ENCODE measurements at regions of chr20 and their contacts with region 1.

Region 1: DNA sequence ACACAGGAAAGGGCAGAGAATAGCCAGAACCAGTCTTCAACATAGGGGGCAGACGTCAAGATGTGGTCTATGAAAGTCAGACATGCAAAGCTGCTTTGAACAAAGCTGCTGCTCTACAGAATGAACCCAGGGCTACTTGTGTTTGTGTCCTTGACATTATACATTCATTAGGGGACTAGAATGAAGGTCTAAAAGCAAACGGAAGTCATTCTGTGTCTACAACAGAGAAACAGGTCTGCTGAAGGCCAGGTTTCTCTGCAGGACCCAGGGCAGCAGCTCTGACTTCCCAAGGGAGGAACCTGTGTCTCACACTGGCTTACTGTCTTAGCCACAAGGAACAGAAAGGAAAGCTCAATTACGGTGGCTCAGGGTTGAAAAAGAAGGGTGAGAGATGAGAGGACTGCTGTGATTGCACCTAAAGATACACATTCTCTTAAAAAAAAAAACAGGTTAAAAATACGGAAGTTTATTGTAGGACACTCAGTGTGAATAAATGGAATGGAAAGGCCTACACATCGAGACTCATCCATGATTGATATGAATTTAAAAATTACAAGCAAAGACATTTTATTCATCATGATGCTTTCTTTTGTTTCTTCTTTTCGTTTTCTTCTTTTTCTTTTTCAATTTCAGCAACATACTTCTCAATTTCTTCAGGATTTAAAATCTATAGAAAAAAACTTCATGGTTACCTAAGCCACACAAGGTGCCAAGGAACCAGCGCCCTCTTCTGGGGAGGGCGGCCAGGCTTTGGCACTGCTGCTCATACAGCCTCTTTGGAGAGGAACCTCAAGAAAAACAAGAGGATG is 6.7 kb downstream of the PSMA7 start:
- H3K4me3 Mint-ChIP-seq: no peak overlapping the region
- H3K27ac Mint-ChIP-seq: peak overlapping the region; percentile 8
- H3K4me1 Mint-ChIP-seq: peaks cover 83% of the 10 kb centered on the region
- H3K27me3 Mint-ChIP-seq: no peaks in the 10 kb centered on the region

Region 2: DNA sequence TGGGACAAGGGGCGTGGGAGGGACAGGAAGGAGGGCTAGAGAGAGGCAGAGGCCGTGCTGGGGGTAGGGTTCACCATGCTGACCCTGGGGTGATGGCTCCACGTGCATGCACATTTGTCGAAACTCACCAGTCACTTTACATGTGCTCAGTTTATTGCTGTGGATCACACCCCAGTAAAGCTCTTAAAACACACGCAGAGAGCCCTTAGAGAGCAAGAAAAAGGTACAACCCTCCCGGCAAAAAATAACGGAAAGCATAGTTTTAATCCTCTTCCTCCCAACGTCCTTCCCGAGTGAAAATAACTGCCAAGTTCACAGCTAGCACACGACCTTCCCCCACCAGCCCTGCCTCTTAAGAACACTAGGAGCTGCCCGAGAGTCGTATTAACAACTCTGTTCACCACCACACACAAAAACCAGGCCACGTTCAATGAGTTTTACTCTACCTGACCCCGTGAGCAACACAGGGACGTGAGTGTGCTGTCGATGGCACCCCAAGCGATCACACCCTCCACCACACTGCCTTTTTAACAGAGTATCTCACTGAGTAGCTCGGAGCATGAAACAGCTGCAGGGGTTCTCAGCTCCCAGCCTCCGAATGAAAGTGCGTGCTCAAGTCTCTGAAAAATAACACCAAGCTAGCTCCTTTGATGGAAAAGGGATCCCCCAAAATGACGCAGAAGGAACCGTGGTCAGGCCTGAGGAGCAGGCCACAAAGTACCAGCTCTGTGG is 110.5 kb before region 1 on chr20:
- intact Hi-C with region 1: no loop called
- H3K4me3 Mint-ChIP-seq: no peak overlapping the region
- H3K27ac Mint-ChIP-seq: peak overlapping the region; percentile 28
- H3K4me1 Mint-ChIP-seq: peaks cover 36% of the 10 kb centered on the region
- H3K27me3 Mint-ChIP-seq: no peaks in the 10 kb centered on the region

Region 3: GRCh38 chr20:62121776-62122631 is 14.5 kb before region 1 on chr20 and contains the start of gene LSM14B:
- intact Hi-C with region 1: loop called (anchors 2 kb)
- H3K4me3 Mint-ChIP-seq: peak within 1 kb of the TSS; percentile 79
- H3K27ac Mint-ChIP-seq: peak within 1 kb of the TSS; percentile 93
- H3K4me1 Mint-ChIP-seq: peaks cover 41% of the 10 kb centered on the region
- H3K27me3 Mint-ChIP-seq: peaks cover 19% of the 10 kb centered on the region

Region 4: GRCh38 chr20:62177307-62177706 is 40.8 kb after region 1 on chr20:
- intact Hi-C with region 1: no loop called
- H3K4me3 Mint-ChIP-seq: no peak overlapping the region
- H3K27ac Mint-ChIP-seq: no peak overlapping the region
- H3K4me1 Mint-ChIP-seq: no peaks in the 10 kb centered on the region
- H3K27me3 Mint-ChIP-seq: no peaks in the 10 kb centered on the region